GM12878 (cell line): ENCODE measurements at regions of chr9 and their contacts with region 1.

Region 1: DNA sequence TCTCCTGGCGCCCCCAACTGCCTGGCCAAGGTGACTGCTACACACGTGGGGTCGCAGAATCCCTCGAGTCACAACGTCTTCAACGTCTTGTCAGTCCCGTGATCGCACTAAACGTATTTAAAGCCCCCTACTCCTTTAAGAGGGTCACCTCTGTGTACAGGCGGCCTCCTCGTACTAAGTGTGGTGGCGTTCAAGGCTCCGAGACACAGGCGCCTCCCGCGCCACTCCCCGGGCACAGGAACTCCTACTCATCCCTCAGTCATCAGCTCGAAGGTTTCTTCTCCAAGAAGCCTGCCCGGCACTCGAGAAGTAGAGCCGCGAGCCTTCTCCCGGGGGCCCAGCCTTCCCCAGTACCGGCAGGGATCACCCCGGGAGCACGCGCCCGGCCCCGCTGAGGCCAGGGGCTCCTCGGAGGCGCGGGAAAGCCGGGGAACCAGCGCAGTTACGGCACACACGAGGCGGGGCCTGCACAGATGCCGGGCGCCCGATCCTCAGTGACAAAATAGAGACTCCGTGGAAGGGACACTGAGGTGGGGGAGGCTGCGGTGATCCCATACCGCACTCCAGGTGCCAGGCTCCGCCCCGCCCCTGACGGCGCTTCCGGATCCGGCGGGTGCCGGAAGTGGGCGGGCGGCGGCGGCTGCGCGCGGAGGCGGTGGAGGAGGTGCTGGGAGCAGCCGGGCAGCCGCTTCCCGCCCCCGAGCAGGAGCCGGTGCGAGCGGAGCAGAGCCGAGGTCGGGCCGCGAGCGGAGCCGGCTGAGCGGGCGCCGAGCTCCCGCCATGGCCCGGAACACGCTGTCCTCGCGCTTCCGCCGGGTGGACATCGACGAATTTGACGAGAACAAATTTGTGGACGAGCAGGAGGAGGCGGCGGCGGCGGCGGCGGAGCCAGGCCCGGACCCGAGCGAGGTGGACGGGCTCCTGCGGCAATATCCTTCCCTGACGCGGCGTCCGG is 6.9 kb downstream of the ARPC5L start:
- DNase-seq: no peak
- ATAC-seq: peak; percentile 75
- H3K4me3 ChIP-seq: peak overlapping the region; percentile 94
- H3K27ac ChIP-seq: peak overlapping the region; percentile 94
- H3K4me1 ChIP-seq: peaks cover 17% of the 10 kb centered on the region
- H3K27me3 ChIP-seq: no peaks in the 10 kb centered on the region
- CTCF ChIP-seq: peak; percentile 31 to 41 (median 40); a peak in 4 of 6 replicates
- EP300 ChIP-seq: no peak
- POLR2A ChIP-seq: peak; percentile 88
- RAD21 ChIP-seq: no peak

Region 2: GRCh38 chr9:124894741-124895170 is 26.0 kb after region 1 on chr9:
- CTCF ChIA-PET with region 1: interaction called, 27 read pairs
- POLR2A ChIA-PET with region 1: interaction called, 5 read pairs
- RAD21 ChIA-PET with region 1: interaction called, 4 read pairs
- SMC1A ChIA-PET with region 1: interaction called, 5 read pairs
- in situ Hi-C with region 1: no loop called
- intact Hi-C with region 1: no loop called
- DNase-seq: no peak
- ATAC-seq: peak; percentile 91
- H3K4me3 ChIP-seq: no peak overlapping the region
- H3K27ac ChIP-seq: no peak overlapping the region
- H3K4me1 ChIP-seq: no peaks in the 10 kb centered on the region
- H3K27me3 ChIP-seq: no peaks in the 10 kb centered on the region
- CTCF ChIP-seq: peak; percentile 57 to 71 (median 58); a peak in 5 of 6 replicates
- EP300 ChIP-seq: no peak
- POLR2A ChIP-seq: no peak
- RAD21 ChIP-seq: peak; percentile 78

Region 3: GRCh38 chr9:124940693-124941453 is 72.1 kb after region 1 on chr9 and contains the start of gene GOLGA1:
- CTCF ChIA-PET with region 1: no interaction called
- POLR2A ChIA-PET with region 1: interaction called, 5 read pairs
- RAD21 ChIA-PET with region 1: interaction called, 5 read pairs
- SMC1A ChIA-PET with region 1: interaction called, 3 read pairs
- in situ Hi-C with region 1: no loop called
- intact Hi-C with region 1: loop called (anchors 2 kb)
- DNase-seq: peak; percentile 79
- ATAC-seq: peak; percentile 90
- H3K4me3 ChIP-seq: peak within 1 kb of the TSS; percentile 86
- H3K27ac ChIP-seq: peak within 1 kb of the TSS; percentile 88
- H3K4me1 ChIP-seq: no peaks in the 10 kb centered on the region
- H3K27me3 ChIP-seq: no peaks in the 10 kb centered on the region
- CTCF ChIP-seq: no peak
- EP300 ChIP-seq: peak in 1 of 2 experiments; percentile 67; a peak in 2 of 4 replicates
- POLR2A ChIP-seq: peak; percentile 96
- RAD21 ChIP-seq: no peak
- polyA plus RNA-seq, gene GOLGA1: 2.9 to 3.0 TPM

Region 4: DNA sequence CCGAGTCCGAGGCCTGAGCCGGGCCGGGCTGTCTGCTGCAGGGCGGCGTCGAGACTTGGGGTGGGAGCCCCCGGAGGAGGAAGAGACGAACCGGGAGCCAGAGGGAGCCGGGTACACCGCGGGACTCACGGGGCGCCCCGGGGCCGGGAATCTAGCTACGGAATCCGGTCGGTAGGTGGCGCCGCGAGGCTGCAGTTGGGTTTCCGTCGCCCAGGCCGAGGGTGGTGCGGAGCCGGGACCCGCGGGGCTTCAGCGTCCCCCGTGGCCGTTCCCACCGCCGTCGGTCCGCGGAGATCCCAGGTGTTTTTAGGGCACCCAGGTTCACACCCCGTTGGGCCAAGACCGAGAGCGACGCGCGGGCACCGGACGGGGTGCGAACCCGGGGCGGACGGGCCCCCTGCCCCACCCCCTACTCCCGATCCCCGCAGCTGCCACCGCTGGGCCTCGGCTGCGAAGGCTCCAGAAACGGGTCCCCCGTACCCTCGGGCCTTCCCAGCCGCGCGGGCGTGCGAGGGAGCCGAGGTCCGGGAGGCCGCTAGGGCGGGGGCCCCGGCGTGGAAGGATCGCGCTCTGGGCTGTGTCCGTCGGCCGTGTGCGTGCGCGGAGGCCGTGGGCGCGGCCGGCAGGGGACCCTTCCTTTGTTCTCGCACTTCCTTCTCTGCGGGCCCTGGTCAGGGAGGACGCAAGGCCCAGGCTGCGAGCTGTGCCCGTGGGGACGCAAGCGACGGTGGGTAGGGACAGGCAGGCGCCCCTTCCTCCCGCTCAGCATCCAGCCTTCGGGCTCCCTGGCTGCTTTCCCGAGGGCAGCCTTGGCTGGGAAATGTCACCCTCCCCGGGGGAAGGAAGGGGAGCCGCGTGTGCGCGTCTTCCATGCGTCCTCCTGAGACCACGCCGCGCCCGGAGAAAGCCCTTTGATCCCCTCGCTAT is 539.4 kb after region 1 on chr9:
- CTCF ChIA-PET with region 1: no interaction called
- POLR2A ChIA-PET with region 1: no interaction called
- RAD21 ChIA-PET with region 1: no interaction called
- SMC1A ChIA-PET with region 1: no interaction called
- in situ Hi-C with region 1: no loop called
- intact Hi-C with region 1: no loop called
- DNase-seq: no peak
- ATAC-seq: peak; percentile 93
- H3K4me3 ChIP-seq: peak overlapping the region; percentile 70; the same call in 1 of the 2 replicates
- H3K27ac ChIP-seq: no peak overlapping the region
- H3K4me1 ChIP-seq: peaks cover 10% of the 10 kb centered on the region
- H3K27me3 ChIP-seq: no peaks in the 10 kb centered on the region
- CTCF ChIP-seq: peak; percentile 75 to 95 (median 87); a peak in 5 of 6 replicates
- EP300 ChIP-seq: no peak
- POLR2A ChIP-seq: peak; percentile 27; the same call in 1 of the 2 replicates
- RAD21 ChIP-seq: peak; percentile 87